ENCODE measurements at regions of chr5 and their contacts with region 1.

Region 1: DNA sequence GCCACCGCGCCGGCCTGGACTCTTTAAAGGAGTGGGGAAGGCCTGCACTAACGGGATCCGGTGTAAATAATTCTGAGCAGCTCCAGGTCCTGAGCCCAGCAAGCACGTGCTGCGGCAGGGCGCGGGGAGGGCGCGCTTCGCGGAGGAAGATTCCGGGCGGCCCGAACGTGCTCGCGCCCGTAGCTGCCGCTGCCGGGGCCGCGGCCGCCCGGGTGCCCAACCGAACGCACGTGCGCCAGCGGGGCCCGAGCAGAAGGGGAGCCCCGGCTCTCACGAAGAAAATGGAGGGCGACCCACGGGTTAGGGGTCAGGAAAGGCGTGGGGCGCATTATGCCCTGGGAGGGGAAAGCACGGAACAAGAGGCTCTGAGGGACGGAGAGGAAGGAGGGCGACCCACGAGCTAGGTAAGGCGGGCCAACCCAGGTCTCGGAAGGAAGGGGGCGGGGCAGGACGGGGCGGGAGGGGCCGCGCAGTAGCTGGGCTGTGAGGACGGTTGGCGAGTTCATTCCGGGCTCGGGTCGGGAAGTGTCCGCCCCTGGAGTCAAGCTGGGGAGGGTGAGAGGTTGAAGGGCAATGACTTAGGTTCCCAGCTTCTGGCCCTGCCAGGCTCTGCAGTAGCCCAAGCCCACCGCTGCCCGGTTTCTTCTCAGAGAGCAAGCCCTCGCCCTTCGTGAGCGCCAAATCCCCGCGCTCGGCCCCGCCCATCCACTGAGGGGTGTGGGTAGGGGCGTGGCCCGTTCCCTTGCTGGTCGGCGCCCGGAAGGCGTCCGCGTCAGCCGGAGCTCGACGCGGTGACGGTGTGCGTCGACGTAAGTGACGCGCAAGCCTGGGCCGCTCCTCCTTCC is at the start of gene ZNF131:
- DNase-seq: peak; percentile 84 to 98
- H3K4me3 ChIP-seq: peak within 1 kb of the TSS; percentile 85 to 87
- H3K27ac ChIP-seq: peak within 1 kb of the TSS; percentile 90 to 99
- H3K4me1 ChIP-seq: peaks cover 0 to 20% of the 10 kb centered on the region in 2 donors
- H3K27me3 ChIP-seq: no peaks in the 10 kb centered on the region
- CTCF ChIP-seq: peak in 1 of 3 experiments; percentile 19
- total RNA-seq, gene ZNF131: 61.2 TPM

Region 2: DNA sequence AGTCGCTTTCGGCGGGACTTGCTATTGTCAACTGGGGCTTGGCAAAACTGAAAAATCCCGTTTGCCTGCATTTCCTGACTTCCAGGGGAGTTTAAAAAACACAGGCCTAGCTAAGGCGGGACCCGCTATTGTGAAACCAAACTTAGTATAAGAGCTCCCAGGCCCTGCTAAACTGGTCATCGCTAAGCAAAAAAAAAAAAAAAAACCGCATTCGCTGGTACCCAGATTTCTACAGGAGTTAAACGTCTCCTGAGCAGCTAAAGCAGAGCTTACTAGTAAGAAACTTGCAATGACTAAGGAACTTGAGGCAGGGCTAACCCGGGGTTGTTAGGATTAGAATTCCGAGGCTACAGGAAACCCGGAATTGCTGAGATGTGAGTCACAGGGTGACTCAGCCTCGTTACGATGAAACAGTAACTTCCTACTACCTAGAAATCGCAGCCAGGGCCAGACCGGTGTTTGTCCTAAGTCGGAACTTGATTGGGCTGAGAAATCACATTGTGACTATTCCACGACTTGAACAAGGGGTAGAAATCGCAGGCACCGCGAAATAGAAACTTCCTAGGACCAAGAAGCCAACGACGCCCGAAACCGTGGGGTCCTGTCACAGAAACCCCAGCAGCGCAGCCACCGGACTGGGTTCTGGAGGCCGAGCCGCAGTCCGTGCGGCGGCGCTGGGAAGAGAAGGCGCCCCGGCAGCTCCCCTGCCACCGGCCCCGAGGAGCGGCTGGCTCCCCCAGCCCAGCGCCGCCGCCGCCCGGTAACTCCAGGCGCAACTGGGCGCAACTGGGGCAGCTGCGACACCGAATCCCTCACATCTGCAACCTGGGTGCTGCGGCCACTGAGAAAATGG is 170.3 kb before region 1 on chr5:
- intact Hi-C with region 1: loop called (anchors 2 kb)
- DNase-seq: peak; percentile 53 to 95
- H3K4me3 ChIP-seq: peak overlapping the region; percentile 61 to 88
- H3K27ac ChIP-seq: peak overlapping the region; percentile 96 to 97
- H3K4me1 ChIP-seq: peaks cover 7% of the 10 kb centered on the region in 2 donors
- H3K27me3 ChIP-seq: no peaks in the 10 kb centered on the region
- CTCF ChIP-seq: no peak

Region 3: DNA sequence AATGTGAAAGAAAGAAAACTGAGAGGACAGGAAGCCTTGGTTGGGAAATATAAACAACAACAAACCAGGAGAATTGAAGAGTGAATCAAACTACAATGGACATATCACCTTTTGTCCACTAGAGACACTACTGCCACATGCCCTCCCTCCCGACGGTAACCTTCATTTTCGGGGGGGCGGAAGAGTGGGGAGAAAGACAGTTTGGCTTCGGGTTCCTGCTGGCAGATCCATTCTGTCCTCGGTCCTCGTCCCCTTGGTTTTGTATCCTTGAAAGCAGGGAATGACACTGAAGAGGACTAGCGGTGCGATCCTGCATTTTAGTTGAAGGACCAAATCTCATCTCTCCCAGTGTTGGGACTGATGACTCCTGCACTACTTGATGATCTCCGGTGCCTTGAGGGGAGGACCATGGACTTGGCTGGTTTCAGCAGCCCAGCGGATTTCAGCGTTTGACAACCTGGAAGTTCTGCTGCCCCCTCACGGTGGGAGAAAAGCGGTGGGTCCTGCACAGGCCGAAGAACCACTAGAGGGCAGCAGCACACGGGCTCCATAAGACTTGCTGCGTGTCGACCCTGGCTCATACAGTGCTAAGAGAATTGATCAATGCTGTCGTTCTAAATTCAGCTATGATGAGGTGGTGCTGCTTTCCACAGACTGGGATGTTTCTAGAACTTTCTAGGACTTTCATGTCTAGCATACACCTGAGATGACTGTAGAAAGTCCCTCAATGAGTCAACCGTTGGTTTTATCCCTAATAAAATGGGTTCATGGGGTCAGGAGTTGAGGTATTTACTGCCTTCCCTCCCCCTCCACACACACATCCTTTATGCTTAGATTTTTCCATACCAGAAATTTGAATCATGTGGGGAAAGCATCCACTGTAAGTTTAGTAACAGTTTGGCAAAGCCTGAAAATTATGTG is 15.3 kb before region 1 on chr5:
- intact Hi-C with region 1: loop called (anchors 2 kb)
- DNase-seq: peak; percentile 61 to 93
- H3K4me3 ChIP-seq: peak overlapping the region; percentile 46 to 54
- H3K27ac ChIP-seq: no peak overlapping the region
- H3K4me1 ChIP-seq: no peaks in the 10 kb centered on the region
- H3K27me3 ChIP-seq: no peaks in the 10 kb centered on the region
- CTCF ChIP-seq: peak; percentile 97 to 99 (median 97)

Region 4: GRCh38 chr5:43191740-43192557 is 71.0 kb after region 1 on chr5 and contains the start of gene NIM1K:
- intact Hi-C with region 1: loop called (anchors 5 kb)
- DNase-seq: peak; percentile 11 to 77
- H3K4me3 ChIP-seq: peak within 1 kb of the TSS; percentile 49 to 87
- H3K27ac ChIP-seq: no peak within 1 kb of the TSS
- H3K4me1 ChIP-seq: peaks cover 0 to 5% of the 10 kb centered on the region in 2 donors
- H3K27me3 ChIP-seq: no peaks in the 10 kb centered on the region
- CTCF ChIP-seq: no peak
- total RNA-seq, gene NIM1K: not detected

Region 5: GRCh38 chr5:43602461-43603343 is 481.8 kb after region 1 on chr5 and contains the start of gene NNT:
- intact Hi-C with region 1: loop called (anchors 5 kb)
- DNase-seq: peak; percentile 12 to 87
- H3K4me3 ChIP-seq: peak within 1 kb of the TSS; percentile 82 to 97
- H3K27ac ChIP-seq: peak within 1 kb of the TSS; percentile 86 to 95
- H3K4me1 ChIP-seq: peaks cover 2 to 9% of the 10 kb centered on the region in 2 donors
- H3K27me3 ChIP-seq: no peaks in the 10 kb centered on the region
- CTCF ChIP-seq: no peak
- total RNA-seq, gene NNT: 13.3 TPM

Measured in ascending aorta (tissue), 2 donors.